ENCODE measurements at regions of chr5 and their contacts with region 1.

Region 1: DNA sequence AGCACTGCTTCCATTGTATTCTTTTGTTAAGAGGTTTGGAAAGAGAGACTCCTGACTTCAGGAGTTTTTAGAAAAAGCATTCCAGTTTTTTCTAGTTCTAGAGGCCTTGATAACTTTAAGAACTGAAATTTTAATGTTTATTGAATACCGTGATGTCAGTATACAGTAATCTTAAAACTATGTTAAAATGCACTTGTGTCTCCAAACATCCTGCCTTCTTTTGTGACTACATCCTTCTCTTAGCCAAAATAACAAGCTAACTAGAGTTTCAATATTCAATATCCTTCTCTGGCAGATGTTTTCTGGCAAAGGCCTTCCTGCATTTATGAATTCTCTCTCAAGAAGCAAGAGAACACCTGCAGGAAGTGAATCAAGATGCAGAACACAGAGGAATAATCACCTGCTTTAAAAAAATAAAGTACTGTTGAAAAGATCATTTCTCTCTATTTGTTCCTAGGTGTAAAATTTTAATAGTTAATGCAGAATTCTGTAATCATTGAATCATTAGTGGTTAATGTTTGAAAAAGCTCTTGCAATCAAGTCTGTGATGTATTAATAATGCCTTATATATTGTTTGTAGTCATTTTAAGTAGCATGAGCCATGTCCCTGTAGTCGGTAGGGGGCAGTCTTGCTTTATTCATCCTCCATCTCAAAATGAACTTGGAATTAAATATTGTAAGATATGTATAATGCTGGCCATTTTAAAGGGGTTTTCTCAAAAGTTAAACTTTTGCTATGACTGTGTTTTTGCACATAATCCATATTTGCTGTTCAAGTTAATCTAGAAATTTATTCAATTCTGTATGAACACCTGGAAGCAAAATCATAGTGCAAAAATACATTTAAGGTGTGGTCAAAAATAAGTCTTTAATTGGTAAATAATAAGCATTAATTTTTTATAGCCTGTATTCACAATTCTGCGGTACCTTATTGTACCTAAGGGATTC is 43.1 kb downstream of the NDFIP1 start:
- DNase-seq: peak; percentile 37
- H3K4me3 ChIP-seq: no peak overlapping the region
- H3K27ac ChIP-seq: no peak overlapping the region
- H3K4me1 ChIP-seq: no peaks in the 10 kb centered on the region
- H3K27me3 ChIP-seq: no peaks in the 10 kb centered on the region
- CTCF ChIP-seq: peak; percentile 78 to 88

Region 2: DNA sequence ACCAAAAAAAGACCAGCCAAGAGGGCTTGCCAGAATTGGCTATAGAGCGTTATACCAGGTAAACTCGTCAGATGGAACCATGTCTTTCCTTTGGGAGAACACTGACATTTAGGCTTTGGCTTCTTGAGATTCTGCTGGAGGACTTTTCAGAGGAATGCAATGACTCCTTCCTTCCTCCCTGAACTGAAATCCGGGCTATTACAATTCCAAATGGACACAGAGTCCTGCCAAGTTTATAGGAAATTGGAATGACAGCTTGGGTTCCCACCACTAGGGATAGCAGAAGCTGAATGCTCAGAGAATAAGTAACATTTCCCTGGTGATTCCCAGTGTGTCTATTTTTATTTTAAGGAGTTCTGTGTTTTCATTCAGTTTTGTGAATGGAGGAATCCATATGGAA is 391.2 kb after region 1 on chr5:
- CTCF ChIA-PET with region 1: interaction called, 12 read pairs
- dilution Hi-C with region 1: no loop called
- in situ Hi-C with region 1: no loop called
- intact Hi-C with region 1: loop called (anchors 1 kb)
- DNase-seq: no peak
- H3K4me3 ChIP-seq: no peak overlapping the region
- H3K27ac ChIP-seq: no peak overlapping the region
- H3K4me1 ChIP-seq: no peaks in the 10 kb centered on the region
- H3K27me3 ChIP-seq: no peaks in the 10 kb centered on the region
- CTCF ChIP-seq: no peak

Region 3: DNA sequence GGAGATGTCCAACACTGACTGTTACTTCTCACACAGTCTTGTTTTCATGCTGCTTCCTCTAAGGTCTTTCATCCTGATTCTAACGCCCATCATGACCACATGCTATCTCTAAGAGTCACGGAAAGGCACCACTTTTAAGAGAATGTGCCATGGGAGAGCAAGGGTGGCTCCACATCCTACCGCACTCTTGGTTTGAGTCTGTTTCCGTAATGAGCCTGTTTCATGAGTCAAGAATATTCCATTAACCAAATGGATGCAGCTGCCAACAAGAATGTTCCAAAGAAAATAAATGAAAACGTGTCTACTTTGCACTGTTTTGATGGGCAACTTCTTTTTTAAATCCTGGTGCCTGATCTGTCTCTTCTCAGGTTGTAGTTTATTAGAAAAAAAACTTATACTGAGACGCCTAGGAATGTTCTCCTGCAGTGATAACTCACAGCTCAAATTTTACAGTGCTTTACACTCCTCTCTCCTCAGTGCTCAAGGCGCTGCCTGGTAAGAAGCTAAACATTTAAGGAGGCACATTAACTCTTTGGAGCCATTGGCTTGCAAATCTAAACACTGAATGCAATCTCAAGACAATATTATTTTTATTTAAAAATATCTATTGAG is 409.9 kb after region 1 on chr5:
- CTCF ChIA-PET with region 1: interaction called, 13 read pairs
- dilution Hi-C with region 1: no loop called
- in situ Hi-C with region 1: no loop called
- intact Hi-C with region 1: no loop called
- DNase-seq: no peak
- H3K4me3 ChIP-seq: no peak overlapping the region
- H3K27ac ChIP-seq: no peak overlapping the region
- H3K4me1 ChIP-seq: no peaks in the 10 kb centered on the region
- H3K27me3 ChIP-seq: no peaks in the 10 kb centered on the region
- CTCF ChIP-seq: no peak

Region 4: DNA sequence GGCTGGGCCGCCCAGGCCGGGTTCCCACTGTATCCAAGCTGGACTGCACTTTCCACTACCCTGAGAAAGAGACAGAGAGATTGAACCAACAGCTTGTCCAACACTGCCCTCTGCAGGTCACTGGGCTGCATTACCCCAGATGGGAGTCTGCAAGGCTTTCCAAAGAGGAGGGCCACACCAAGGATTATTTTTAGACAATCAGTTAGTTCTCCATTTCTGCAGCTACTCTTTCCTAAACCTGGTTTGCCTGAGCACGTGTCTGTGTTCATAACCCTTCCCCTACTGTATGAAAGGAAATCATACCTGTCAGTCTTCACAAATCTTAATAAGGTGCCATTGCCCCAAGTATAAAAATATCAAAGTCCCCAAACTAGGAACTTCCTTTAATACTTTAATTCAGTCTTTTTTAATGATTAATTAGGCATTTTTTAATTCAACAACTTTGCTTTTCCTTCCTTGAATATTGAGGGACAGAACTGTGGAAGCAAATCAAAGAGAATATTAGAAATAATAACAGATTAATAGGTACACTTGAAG is 547.5 kb after region 1 on chr5:
- CTCF ChIA-PET with region 1: no interaction called
- dilution Hi-C with region 1: no loop called
- in situ Hi-C with region 1: no loop called
- intact Hi-C with region 1: loop called (anchors 2 kb)
- DNase-seq: peak; percentile 68
- H3K4me3 ChIP-seq: no peak overlapping the region
- H3K27ac ChIP-seq: no peak overlapping the region
- H3K4me1 ChIP-seq: peaks cover 10% of the 10 kb centered on the region
- H3K27me3 ChIP-seq: no peaks in the 10 kb centered on the region
- CTCF ChIP-seq: peak; percentile 98 to 99

Measured in mammary epithelial cell (primary cell).